ENCODE measurements at regions of chr20 and their contacts with region 1.

Region 1: GRCh38 chr20:21505161-21505809 is 8.6 kb downstream of the NKX2-2 start:
- DNase-seq: peak; percentile 85
- H3K4me3 ChIP-seq: peak overlapping the region in 1 of 2 experiments; percentile 23; a peak in 1 of 4 replicates
- H3K27ac ChIP-seq: no peak overlapping the region
- H3K4me1 ChIP-seq: peaks cover 0 to 4% of the 10 kb centered on the region in 2 experiments; a peak in 2 of 4 replicates
- H3K27me3 ChIP-seq: peaks cover 79% of the 10 kb centered on the region
- CTCF ChIP-seq: peak; percentile 97
- EP300 ChIP-seq: no peak
- RAD21 ChIP-seq: peak; percentile 93

Region 2: GRCh38 chr20:21048841-21049273 is 456.4 kb before region 1 on chr20:
- CTCF ChIA-PET with region 1: interaction called, 19 read pairs
- POLR2A ChIA-PET with region 1: no interaction called
- DNase-seq: peak; percentile 45
- H3K4me3 ChIP-seq: no peak overlapping the region; a peak in 1 of 4 replicates
- H3K27ac ChIP-seq: no peak overlapping the region
- H3K4me1 ChIP-seq: no peaks in the 10 kb centered on the region; a peak in 1 of 4 replicates
- H3K27me3 ChIP-seq: no peaks in the 10 kb centered on the region; the same call in 1 of the 2 replicates
- CTCF ChIP-seq: peak; percentile 66
- EP300 ChIP-seq: no peak
- RAD21 ChIP-seq: 0 out of 2 replicates have a peak, but pooled peaks have one; percentile 26

Region 3: DNA sequence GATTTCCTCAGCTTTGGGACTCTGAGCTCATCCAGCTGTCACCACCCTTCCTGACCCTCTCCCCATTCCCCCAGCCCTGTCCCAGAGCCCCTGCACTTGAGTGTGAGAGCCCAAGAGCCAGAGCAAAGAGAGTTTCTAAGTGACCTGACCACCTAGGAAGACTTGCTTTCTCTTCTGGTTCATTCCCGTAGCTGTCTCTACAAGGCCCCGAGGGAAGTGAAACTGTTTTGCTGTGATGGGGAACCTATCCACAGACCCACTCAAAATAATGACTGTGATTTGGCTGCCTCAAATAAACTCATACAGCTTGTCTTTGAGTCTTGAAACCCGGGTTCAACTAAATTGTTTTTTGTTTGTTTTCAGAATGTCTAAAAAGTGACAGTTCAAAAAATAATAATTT is 276.8 kb before region 1 on chr20:
- CTCF ChIA-PET with region 1: interaction called, 21 read pairs
- POLR2A ChIA-PET with region 1: no interaction called
- DNase-seq: no peak
- H3K4me3 ChIP-seq: no peak overlapping the region
- H3K27ac ChIP-seq: no peak overlapping the region
- H3K4me1 ChIP-seq: no peaks in the 10 kb centered on the region; a peak in 1 of 4 replicates
- H3K27me3 ChIP-seq: no peaks in the 10 kb centered on the region
- CTCF ChIP-seq: no peak
- EP300 ChIP-seq: no peak
- RAD21 ChIP-seq: no peak

Region 4: DNA sequence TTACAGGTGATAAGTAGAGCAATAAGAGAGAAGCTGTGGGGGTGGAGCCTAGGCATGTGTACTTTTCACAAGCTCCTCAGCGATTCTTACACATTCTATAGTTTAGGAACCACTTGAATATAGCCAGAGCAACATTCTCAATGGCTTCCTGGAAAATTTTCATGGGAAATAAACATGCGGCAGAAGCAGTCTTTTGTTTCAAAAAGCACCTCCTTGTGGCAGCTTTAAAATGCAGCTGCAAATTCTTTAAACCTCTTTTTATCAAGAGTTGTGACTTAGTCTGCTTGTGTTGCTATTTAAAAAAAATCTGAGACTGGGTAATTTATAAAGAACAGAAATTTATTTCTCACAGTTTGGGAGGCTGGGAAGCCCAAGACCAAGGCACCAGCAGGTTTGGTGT is 15.2 kb before region 1 on chr20:
- CTCF ChIA-PET with region 1: interaction called, 36 read pairs
- POLR2A ChIA-PET with region 1: no interaction called
- DNase-seq: no peak
- H3K4me3 ChIP-seq: no peak overlapping the region
- H3K27ac ChIP-seq: no peak overlapping the region
- H3K4me1 ChIP-seq: no peaks in the 10 kb centered on the region
- H3K27me3 ChIP-seq: peaks cover 49% of the 10 kb centered on the region
- CTCF ChIP-seq: peak; percentile 53
- EP300 ChIP-seq: no peak
- RAD21 ChIP-seq: peak; percentile 33; the same call in 1 of the 2 replicates

Region 5: GRCh38 chr20:21520702-21521595 is 15.7 kb after region 1 on chr20:
- CTCF ChIA-PET with region 1: interaction called, 75 read pairs
- POLR2A ChIA-PET with region 1: no interaction called
- DNase-seq: peak; percentile 10
- H3K4me3 ChIP-seq: no peak overlapping the region
- H3K27ac ChIP-seq: no peak overlapping the region
- H3K4me1 ChIP-seq: no peaks in the 10 kb centered on the region
- H3K27me3 ChIP-seq: peaks cover 92% of the 10 kb centered on the region
- CTCF ChIP-seq: 0 out of 2 replicates have a peak, but pooled peaks have one; percentile 12
- EP300 ChIP-seq: no peak
- RAD21 ChIP-seq: no peak

Region 6: DNA sequence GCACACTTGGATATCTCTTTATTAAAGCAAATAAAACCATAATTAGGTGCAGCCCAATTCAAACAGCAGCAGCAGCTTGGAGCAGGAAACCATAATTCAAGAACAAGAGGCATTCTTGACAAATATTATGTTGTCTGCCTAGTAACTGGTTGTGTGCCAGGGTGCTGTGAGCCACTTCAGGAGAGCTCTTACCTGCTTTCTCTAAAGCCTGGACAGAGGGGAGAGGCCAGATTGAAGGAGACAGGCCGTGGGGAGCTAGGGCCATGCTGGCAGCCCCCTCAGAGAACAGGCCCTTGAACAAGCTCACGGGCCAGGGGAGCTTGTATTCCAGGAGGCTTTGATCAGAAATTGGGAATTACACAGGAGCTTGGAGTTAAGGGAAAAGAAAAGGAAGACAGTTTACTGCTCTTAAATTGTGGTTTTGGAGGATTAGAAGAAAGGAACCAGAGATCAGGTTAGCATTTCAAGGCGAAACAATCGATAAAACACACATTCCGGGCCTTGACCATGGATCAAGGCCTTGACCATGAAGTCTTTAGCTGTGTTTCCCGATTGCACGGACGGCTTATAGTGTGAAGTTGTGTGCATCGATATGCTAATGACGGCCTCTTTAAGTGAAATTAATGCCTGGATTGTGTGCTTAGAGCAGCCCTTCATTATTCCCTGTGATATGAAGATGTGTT is 78.3 kb after region 1 on chr20:
- CTCF ChIA-PET with region 1: no interaction called
- POLR2A ChIA-PET with region 1: no interaction called
- DNase-seq: no peak
- H3K4me3 ChIP-seq: no peak overlapping the region
- H3K27ac ChIP-seq: no peak overlapping the region
- H3K4me1 ChIP-seq: no peaks in the 10 kb centered on the region; a peak in 1 of 4 replicates
- H3K27me3 ChIP-seq: peaks cover 37% of the 10 kb centered on the region; the same call in 1 of the 2 replicates
- CTCF ChIP-seq: no peak
- EP300 ChIP-seq: no peak
- RAD21 ChIP-seq: no peak

Region 7: GRCh38 chr20:21901470-21902275 is 396.4 kb after region 1 on chr20:
- CTCF ChIA-PET with region 1: no interaction called
- POLR2A ChIA-PET with region 1: no interaction called
- DNase-seq: no peak
- H3K4me3 ChIP-seq: no peak overlapping the region
- H3K27ac ChIP-seq: no peak overlapping the region
- H3K4me1 ChIP-seq: no peaks in the 10 kb centered on the region
- H3K27me3 ChIP-seq: no peaks in the 10 kb centered on the region
- CTCF ChIP-seq: no peak
- EP300 ChIP-seq: no peak
- RAD21 ChIP-seq: no peak

Measured in SK-N-SH (cell line).